ENCODE measurements at regions of chrX and their contacts with region 1.

Region 1: DNA sequence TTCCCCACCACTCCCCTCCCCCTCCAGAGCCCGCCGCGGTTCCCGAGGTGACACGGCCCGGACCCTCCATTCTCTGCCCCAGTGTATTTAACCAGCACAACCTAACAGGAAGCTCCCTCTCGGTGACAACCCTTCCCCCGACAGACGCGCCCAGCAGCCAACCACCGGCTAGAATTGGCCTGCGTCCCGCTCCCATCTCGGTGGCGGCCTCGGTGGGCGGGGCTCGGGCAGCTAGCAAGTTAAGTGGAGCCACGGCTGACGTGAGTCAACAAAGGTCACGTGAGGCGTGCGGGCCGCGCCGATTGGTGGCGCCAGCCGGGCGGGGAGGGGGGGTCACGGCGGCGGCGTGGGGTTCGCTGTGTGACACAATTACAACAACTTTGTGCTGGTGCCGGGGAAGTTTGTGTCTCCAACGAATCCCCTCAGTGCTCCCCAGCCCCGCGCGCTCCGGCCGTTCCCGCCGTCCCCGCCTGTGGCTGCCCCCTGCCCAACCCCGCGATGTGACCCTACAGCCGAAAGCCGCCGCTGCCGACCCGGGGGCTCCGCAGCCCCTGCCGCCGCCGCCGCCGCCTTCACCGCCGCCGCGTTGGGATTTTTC is at the start of gene KDM6A:
- DNase-seq: peak; percentile 96
- H3K4me3 Mint-ChIP-seq: peak within 1 kb of the TSS; percentile 95
- H3K27ac Mint-ChIP-seq: peak within 1 kb of the TSS; percentile 98
- H3K4me1 Mint-ChIP-seq: peaks cover 12% of the 10 kb centered on the region
- H3K27me3 Mint-ChIP-seq: no peaks in the 10 kb centered on the region
- total RNA-seq, gene KDM6A: 20.9 to 21.5 TPM

Region 2: GRCh38 chrX:44785652-44786051 is 87.3 kb before region 1 on chrX:
- CTCF ChIA-PET with region 1: no interaction called
- POLR2A ChIA-PET with region 1: no interaction called
- intact Hi-C with region 1: no loop called
- DNase-seq: no peak
- H3K4me3 Mint-ChIP-seq: no peak overlapping the region
- H3K27ac Mint-ChIP-seq: no peak overlapping the region
- H3K4me1 Mint-ChIP-seq: no peaks in the 10 kb centered on the region
- H3K27me3 Mint-ChIP-seq: no peaks in the 10 kb centered on the region

Region 3: GRCh38 chrX:44945736-44946135 is 72.8 kb after region 1 on chrX:
- CTCF ChIA-PET with region 1: interaction called, 5 read pairs
- POLR2A ChIA-PET with region 1: interaction called, 5 read pairs
- intact Hi-C with region 1: loop called (anchors 5 kb)
- DNase-seq: peak; percentile 30
- H3K4me3 Mint-ChIP-seq: no peak overlapping the region
- H3K27ac Mint-ChIP-seq: no peak overlapping the region
- H3K4me1 Mint-ChIP-seq: peaks cover 19% of the 10 kb centered on the region
- H3K27me3 Mint-ChIP-seq: no peaks in the 10 kb centered on the region

Region 4: DNA sequence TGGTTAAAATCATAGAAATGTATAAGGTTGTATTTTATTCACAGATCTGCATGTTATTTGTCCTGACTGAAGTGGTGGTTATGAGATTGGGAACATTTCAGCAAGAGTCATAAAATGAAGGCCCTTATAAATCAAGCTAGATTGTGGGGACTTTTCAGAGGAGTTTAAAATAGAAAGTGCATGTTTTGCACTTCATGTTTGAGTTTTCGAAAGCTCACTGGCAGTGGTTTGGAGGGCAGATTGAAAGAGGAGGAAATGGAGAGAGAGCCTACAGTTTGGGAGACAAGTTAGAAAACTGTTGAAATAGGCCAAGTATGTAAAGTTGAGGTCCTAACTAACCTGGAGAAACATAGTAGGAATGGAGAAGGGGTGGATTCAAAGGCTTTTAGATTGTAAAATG is 125.0 kb after region 1 on chrX:
- CTCF ChIA-PET with region 1: no interaction called
- POLR2A ChIA-PET with region 1: no interaction called
- intact Hi-C with region 1: loop called (anchors 5 kb)
- DNase-seq: no peak
- H3K4me3 Mint-ChIP-seq: peak overlapping the region; percentile 35
- H3K27ac Mint-ChIP-seq: peak overlapping the region; percentile 90
- H3K4me1 Mint-ChIP-seq: peaks cover 67% of the 10 kb centered on the region
- H3K27me3 Mint-ChIP-seq: no peaks in the 10 kb centered on the region